Caco-2 (cell line): ENCODE measurements at regions of chr4 and their contacts with region 1.

Region 1: DNA sequence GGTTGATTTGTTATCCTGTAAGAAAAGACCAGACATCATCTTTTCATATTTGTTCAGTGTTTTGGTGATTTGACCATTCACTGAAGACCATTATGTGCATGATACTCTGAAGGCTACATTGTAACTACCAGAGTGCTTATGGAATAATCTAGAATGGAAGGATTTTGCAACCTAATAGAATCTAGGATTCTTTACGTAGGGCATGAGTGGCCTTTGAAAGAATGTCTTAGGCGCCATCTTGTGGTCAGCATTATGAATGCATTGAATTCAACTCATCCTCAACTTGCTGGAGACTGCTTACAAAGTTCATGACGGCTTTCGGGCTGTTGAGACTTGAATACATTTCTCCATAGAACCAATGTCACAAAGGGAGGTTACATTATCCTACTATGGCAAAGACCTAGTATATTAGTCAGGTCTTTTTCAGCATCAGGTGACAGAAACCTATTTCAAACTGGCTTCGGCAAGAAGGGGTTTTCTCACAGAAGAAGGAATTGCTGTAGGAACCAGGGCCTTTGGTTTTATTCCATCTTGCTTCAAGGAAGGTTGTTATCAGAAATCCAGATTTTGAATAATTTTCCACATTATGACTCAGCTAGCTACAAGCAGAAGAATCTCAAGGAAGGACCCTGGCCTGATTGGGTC is 104.1 kb downstream of the GPAT3 start:
- DNase-seq: peak; percentile 53 to 64
- H3K4me3 ChIP-seq: no peak overlapping the region
- H3K4me3 Mint-ChIP-seq: no peak overlapping the region
- H3K27ac Mint-ChIP-seq: no peak overlapping the region
- H3K4me1 ChIP-seq: no peaks in the 10 kb centered on the region
- H3K4me1 Mint-ChIP-seq: peaks cover 6% of the 10 kb centered on the region
- H3K27me3 ChIP-seq: no peaks in the 10 kb centered on the region
- H3K27me3 Mint-ChIP-seq: peaks cover 2% of the 10 kb centered on the region
- CTCF ChIP-seq: peak; percentile 53 to 69

Region 2: DNA sequence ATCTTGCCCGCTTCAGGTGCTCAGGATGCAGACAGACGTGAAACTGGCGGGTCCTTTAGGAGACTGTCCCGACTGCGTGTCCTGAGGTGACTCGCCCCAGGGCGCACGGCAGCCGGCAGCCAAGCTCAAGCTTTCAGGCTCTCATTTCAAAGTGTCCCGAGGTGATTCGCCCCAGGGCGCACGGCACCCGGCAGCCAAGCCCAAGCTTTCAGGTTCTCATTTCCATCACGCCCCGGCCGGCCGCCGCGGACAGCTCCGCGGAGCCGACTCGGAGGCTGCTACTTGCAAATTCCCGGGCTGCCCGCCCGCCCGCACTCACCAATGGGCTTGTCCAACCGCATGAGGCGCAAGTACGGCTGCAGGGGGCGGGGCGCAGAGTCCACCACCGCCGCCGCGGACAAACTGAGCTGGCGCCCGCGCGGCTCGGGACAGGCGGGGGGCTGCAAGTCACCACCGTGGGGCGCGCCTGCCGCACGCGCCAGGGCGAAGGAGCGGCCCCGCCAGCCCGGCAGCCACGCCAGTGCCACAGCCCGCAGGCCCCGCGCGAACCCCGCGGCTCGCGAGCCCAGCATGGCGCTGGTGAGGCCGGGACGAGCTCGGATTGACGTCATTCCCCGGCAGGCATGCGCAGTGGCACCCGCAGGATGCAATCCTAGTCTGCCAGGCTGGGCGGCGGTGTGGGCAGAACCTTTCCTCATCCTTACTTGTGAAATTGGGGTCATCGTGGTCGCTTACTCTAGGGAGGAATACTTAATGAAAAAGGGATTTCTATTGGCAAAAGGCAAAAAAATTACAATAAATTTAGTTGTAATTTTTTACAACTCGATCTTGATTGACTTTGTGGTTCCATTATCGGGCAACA is 355.5 kb before region 1 on chr4 and contains the start of gene COQ2:
- CTCF ChIA-PET with region 1: interaction called, 3 read pairs
- POLR2A ChIA-PET with region 1: no interaction called
- intact Hi-C with region 1: loop called (anchors 1 kb)
- DNase-seq: peak; percentile 94 to 95
- H3K4me3 ChIP-seq: peak within 1 kb of the TSS; percentile 70
- H3K4me3 Mint-ChIP-seq: peak within 1 kb of the TSS; percentile 89
- H3K27ac Mint-ChIP-seq: peak within 1 kb of the TSS; percentile 92
- H3K4me1 ChIP-seq: peaks cover 19% of the 10 kb centered on the region; the same call in 1 of the 2 replicates
- H3K4me1 Mint-ChIP-seq: peaks cover 7% of the 10 kb centered on the region
- H3K27me3 ChIP-seq: no peaks in the 10 kb centered on the region
- H3K27me3 Mint-ChIP-seq: no peaks in the 10 kb centered on the region
- CTCF ChIP-seq: peak in 1 of 2 experiments; percentile 9
- total RNA-seq, gene COQ2: 22.0 and 24.2 TPM in 2 replicates

Region 3: GRCh38 chr4:83369831-83370639 is 269.9 kb before region 1 on chr4:
- CTCF ChIA-PET with region 1: no interaction called
- POLR2A ChIA-PET with region 1: no interaction called
- intact Hi-C with region 1: loop called (anchors 2 kb)
- DNase-seq: peak in 1 of 2 experiments; percentile 9
- H3K4me3 ChIP-seq: no peak overlapping the region
- H3K4me3 Mint-ChIP-seq: no peak overlapping the region
- H3K27ac Mint-ChIP-seq: no peak overlapping the region
- H3K4me1 ChIP-seq: no peaks in the 10 kb centered on the region; the same call in 1 of the 2 replicates
- H3K4me1 Mint-ChIP-seq: no peaks in the 10 kb centered on the region
- H3K27me3 ChIP-seq: no peaks in the 10 kb centered on the region
- H3K27me3 Mint-ChIP-seq: no peaks in the 10 kb centered on the region
- CTCF ChIP-seq: no peak

Region 4: DNA sequence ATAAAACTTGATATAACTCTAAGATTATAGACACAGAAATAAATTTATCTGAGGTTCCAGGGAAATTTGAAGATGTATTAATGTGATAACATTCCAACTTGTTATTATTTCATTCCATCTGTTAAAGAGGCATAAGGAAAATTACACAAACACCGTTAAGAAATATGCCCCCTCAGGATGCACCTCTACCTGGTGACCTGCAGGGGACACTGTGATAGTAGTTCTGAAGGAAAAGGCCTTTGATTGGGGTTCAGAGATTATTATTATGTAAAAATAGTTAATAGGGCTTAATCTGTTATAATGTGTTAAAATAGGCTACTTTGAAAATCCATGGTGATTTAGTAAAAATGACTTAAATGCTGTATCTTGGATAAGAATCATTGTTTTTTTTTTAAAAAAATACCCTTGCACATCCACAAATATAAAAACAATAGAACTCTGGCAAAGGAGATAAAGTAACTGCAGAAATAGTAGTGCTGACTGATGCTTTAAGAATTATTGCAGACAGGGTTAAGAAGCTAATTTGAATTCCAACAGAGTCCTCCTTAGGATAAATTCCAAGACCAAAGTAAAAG is 149.0 kb before region 1 on chr4:
- CTCF ChIA-PET with region 1: no interaction called
- POLR2A ChIA-PET with region 1: no interaction called
- intact Hi-C with region 1: loop called (anchors 1 kb)
- DNase-seq: peak in 1 of 2 experiments; percentile 20
- H3K4me3 ChIP-seq: no peak overlapping the region
- H3K4me3 Mint-ChIP-seq: no peak overlapping the region
- H3K27ac Mint-ChIP-seq: no peak overlapping the region
- H3K4me1 ChIP-seq: peaks cover 18% of the 10 kb centered on the region
- H3K4me1 Mint-ChIP-seq: peaks cover 10% of the 10 kb centered on the region
- H3K27me3 ChIP-seq: no peaks in the 10 kb centered on the region
- H3K27me3 Mint-ChIP-seq: no peaks in the 10 kb centered on the region
- CTCF ChIP-seq: peak; percentile 73 to 78

Region 5: GRCh38 chr4:83591056-83591455 is 48.9 kb before region 1 on chr4:
- CTCF ChIA-PET with region 1: interaction called, 10 read pairs
- POLR2A ChIA-PET with region 1: no interaction called
- intact Hi-C with region 1: no loop called
- DNase-seq: no peak
- H3K4me3 ChIP-seq: no peak overlapping the region
- H3K4me3 Mint-ChIP-seq: no peak overlapping the region
- H3K27ac Mint-ChIP-seq: no peak overlapping the region
- H3K4me1 ChIP-seq: no peaks in the 10 kb centered on the region
- H3K4me1 Mint-ChIP-seq: no peaks in the 10 kb centered on the region
- H3K27me3 ChIP-seq: no peaks in the 10 kb centered on the region
- H3K27me3 Mint-ChIP-seq: no peaks in the 10 kb centered on the region
- CTCF ChIP-seq: no peak

Region 6: DNA sequence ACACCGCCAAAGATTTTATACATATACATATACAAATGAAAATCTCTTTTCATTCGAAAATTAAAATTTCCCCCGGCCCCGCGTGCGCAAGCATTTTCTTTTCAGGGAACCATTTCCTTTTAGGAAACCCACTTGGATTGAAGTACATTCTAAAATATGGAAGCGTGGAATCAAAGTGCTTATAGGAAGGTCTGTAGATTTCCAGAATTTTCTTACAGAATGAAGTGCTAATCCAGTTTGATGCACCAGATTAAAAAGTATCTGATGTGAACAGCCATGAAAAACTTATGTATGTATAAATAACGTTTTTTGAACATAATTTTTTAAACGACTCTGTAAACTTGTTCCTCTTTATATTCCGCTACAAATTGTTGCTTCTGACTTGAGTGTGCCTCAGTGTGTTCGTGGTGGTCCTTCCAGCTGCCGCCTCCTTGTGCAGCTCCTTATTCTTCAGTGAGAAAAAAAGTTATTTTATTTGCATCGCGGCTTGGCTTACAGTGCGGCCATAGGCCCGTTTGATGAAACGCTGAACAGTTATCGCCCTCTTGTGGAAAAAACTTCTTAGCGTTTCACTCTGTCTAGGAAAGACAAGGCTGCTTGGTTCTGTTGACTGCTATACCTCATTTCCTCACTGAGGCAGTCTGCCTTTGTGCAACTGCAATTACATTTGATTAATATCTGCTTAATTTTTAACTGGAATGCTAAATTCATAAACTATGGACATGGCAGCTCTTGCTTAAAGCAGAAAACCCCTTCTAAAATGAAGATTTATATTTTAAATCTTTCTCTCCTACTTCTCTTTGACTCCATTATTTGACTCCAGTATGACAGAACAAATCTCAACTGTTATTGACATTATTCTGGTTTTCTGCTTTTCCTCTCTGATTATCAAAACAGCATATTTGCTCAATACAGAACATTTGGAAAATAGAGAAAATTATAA is 863.8 kb after region 1 on chr4:
- CTCF ChIA-PET with region 1: no interaction called
- POLR2A ChIA-PET with region 1: no interaction called
- intact Hi-C with region 1: loop called (anchors 2 kb)
- DNase-seq: peak in 1 of 2 experiments; percentile 64
- H3K4me3 ChIP-seq: no peak overlapping the region
- H3K4me3 Mint-ChIP-seq: no peak overlapping the region
- H3K27ac Mint-ChIP-seq: no peak overlapping the region
- H3K4me1 ChIP-seq: no peaks in the 10 kb centered on the region
- H3K4me1 Mint-ChIP-seq: peaks cover 6% of the 10 kb centered on the region
- H3K27me3 ChIP-seq: no peaks in the 10 kb centered on the region
- H3K27me3 Mint-ChIP-seq: peaks cover 17% of the 10 kb centered on the region
- CTCF ChIP-seq: peak; percentile 68 to 70